Breast epithelium (tissue), 4 donors: ENCODE measurements at regions of chr1 and their contacts with region 1.

Region 1: DNA sequence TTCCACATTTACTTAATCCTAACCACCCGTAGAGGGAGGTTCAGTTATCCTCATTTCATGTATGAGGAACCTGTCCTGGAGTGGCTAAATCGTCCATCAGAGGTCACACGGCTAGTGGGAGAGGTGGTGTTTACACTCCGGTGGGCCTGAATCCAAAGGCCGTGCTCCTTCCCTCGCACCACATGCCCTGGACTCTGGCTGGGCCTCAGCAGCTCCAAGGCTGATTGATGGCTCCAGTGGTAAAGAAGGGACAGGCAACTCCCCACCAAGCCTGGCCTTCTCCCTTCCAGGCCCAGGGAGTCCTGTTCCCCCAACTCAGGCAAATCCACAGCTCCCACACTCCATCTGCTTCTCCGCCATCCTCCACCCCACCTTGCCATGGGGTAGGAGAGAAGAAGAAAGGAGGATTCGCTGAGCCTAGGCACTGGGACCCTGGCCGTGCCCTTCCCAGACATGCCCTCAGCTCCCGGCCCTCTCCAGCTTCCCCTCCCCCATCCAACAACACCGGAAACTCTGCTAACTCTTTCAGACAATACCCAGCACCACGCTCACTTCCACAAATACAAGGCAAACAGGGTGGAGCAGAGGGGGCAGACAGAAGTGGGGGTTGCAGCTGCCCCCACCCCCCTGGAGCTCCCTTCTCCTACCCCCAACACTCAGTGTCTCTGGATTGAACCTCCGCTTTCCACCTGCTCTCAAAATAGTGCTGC is 10.9 kb downstream of the ARHGEF2 start:
- DNase-seq: no peak
- H3K4me3 ChIP-seq: peak overlapping the region in 2 of 3 donors; percentile 2 to 22
- H3K27ac ChIP-seq: peak overlapping the region; percentile 68 to 86
- H3K4me1 ChIP-seq: peaks cover 0 to 20% of the 10 kb centered on the region in 2 donors
- H3K27me3 ChIP-seq: no peaks in the 10 kb centered on the region
- CTCF ChIP-seq: no peak
- POLR2A ChIP-seq: no peak

Region 2: GRCh38 chr1:156012051-156012817 is 44.7 kb after region 1 on chr1:
- intact Hi-C with region 1: no loop called
- DNase-seq: no peak
- H3K4me3 ChIP-seq: no peak overlapping the region
- H3K27ac ChIP-seq: no peak overlapping the region
- H3K4me1 ChIP-seq: no peaks in the 10 kb centered on the region
- H3K27me3 ChIP-seq: no peaks in the 10 kb centered on the region
- CTCF ChIP-seq: no peak
- POLR2A ChIP-seq: no peak

Region 3: GRCh38 chr1:156217871-156218270 is 250.4 kb after region 1 on chr1:
- intact Hi-C with region 1: loop called (anchors 5 kb)
- DNase-seq: no peak
- H3K4me3 ChIP-seq: no peak overlapping the region
- H3K27ac ChIP-seq: peak overlapping the region; percentile 8 to 65
- H3K4me1 ChIP-seq: peaks cover 3 to 12% of the 10 kb centered on the region in 2 donors
- H3K27me3 ChIP-seq: no peaks in the 10 kb centered on the region
- CTCF ChIP-seq: no peak
- POLR2A ChIP-seq: no peak